ENCODE measurements at regions of chr2 and their contacts with region 1.

Region 1: DNA sequence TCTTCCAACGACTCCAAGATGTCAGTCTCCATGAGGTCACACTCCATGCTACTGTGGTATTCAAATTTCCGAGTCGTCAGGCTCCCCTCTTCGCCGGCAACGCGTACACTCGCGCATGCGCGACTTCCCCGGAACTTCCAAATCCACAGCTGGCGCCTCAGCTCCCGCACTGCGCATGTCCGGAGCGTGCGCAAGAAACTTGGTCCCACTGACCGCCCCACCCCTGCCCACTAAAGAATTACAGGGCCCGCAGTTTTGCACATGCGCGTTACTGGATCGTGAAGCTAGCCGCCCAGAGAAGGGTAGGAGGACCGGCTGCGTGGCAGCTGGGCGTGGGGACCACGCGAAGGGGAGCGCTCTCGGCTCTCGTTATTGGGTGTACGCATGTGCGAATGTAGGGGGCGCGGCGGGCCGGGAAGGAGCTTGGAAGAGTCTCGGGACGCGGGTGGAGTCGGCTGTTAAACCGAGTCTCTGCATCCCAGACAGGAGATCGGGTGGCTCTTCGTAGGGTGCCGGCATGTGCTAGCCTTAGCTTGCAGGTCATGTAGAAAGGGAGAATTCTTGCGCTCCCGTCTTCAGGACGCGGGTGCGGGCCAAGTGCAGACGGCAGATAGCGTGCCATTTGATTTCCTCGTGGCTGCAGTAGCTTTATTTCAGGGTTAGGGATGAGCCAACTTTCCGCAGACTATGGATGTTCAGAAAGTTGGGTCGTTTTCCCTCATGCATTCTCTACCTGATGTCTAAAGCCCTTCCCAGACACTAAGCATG is at the start of gene FAM98A:
- DNase-seq: peak; percentile 99 to 100 (median 99)
- ATAC-seq: peak; percentile 99
- H3K4me3 ChIP-seq: peak within 1 kb of the TSS; percentile 65 to 76
- H3K27ac ChIP-seq: peak within 1 kb of the TSS; percentile 60 to 86 (median 83)
- H3K4me1 ChIP-seq: peaks cover 18% of the 10 kb centered on the region
- H3K27me3 ChIP-seq: no peaks in the 10 kb centered on the region
- CTCF ChIP-seq: peak in 4 of 7 experiments; percentile 21 to 29 (median 24)
- POLR2A ChIP-seq: peak in 2 of 3 donors; percentile 68 to 75
- total RNA-seq, gene FAM98A: 20.1 to 97.3 TPM

Region 2: DNA sequence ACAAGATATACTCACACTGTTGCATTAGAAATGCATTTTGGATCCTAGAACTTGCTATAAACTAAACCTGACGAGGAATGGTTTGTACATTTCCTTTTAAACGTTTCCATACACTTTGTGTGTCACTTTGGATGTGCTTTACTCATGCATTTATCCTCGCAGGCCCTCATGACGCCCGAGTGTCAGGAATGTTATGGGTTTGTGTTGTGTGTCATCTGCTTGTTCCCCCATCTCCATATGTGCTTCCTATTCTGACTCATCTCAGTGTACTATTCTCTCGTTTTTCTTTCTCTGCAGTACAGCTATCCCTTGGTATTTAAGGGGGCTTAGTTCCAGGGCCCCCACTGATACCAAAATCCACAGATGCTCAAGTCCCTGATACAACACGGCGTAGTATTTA is 244.4 kb before region 1 on chr2:
- intact Hi-C with region 1: no loop called
- DNase-seq: no peak
- ATAC-seq: no peak
- H3K4me3 ChIP-seq: no peak overlapping the region
- H3K27ac ChIP-seq: no peak overlapping the region
- H3K4me1 ChIP-seq: no peaks in the 10 kb centered on the region
- H3K27me3 ChIP-seq: no peaks in the 10 kb centered on the region
- CTCF ChIP-seq: no peak
- POLR2A ChIP-seq: no peak

Region 3: DNA sequence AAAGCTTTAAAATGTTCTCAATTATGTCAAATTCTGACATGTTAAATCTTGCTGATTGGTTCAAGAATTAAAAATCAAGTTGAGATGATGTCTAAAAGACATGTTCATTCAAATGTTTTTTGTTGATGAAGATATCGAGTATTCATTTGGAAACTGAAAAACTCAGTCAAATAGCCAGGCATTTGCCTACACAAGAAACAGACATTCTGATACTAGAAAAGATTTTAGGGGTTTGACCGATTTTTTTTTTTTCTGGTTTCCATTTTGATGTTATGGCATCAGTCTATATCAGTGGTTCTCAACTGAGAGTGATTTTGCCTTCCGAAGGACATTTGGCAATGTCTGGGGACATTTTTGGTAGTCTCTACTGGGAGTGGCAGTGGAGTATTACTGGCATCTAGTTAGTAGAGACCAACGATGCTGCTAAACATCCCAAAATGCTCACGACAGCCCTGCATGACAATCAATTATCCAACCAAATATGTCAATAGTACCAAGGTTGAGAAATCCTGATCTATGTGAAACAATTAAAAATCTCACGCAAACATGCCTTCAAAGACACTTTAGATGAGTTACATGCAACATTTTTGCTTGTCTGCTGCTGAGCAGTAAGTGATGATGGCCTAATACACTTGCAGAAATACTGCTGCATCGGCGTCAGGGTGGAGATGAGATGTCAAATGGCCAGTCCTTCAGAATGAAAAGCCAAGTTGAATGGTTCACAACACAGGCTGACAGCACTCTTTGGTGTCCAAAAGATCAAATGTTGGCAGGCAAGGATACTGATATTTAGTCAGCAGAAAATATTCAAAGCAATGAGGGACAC is 110.4 kb before region 1 on chr2:
- intact Hi-C with region 1: loop called (anchors 10 kb)
- DNase-seq: no peak
- ATAC-seq: no peak
- H3K4me3 ChIP-seq: no peak overlapping the region
- H3K27ac ChIP-seq: no peak overlapping the region
- H3K4me1 ChIP-seq: no peaks in the 10 kb centered on the region
- H3K27me3 ChIP-seq: no peaks in the 10 kb centered on the region
- CTCF ChIP-seq: no peak
- POLR2A ChIP-seq: no peak

Measured in body of pancreas (tissue), 4 donors.